Pancreas (tissue), 10 donors: ENCODE measurements at regions of chr10 and their contacts with region 1.

Region 1: DNA sequence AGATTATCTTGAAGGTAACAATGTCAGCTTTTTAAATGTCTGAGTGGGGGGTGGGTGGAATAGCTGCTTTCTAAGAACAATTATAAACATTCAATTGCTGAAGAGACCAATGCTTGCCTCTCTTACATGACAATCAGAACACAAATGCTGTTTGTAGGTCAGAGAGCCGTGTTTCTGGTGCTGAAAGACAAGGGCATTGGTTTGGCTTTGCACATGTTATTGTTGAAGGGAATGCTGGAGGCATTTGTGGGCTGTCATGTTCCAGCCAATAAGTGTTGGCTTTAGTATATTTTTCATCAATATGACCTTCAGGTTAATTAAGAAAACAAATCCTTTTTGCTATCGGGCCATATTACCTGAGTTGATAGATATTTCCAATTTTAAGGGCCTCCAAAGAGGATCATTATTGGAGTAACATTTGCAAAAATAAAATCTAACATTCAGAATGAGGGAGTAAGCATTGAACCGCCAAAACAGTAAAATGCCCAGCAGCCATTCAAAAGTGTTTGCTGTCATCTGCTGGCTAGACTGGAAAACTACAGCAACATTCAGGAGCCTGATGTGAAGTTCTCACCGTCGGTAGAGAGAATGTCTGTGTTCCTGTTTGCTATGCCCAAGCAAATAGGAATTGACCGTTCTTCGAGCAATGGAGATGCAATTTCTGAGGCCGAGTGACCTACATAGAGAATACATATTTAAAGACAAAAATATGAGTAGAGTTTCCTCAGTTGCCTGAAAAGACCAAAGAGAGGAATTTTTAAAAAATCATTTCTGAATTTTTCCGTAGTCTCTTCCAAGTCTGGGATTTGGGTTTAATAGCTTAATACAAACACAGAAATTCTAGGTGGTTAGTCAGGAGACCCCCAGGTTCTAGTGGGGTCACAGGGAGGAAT is 118.9 kb downstream of the APBB1IP start:
- DNase-seq: peak in 2 of 6 donors; percentile 7 to 41
- ATAC-seq: peak; percentile 73 to 89 (median 86)
- H3K4me3 ChIP-seq: no peak overlapping the region
- H3K27ac ChIP-seq: peak overlapping the region in 1 of 4 donors; percentile 17
- H3K4me1 ChIP-seq: peaks cover 0 to 7% (median 0%) of the 10 kb centered on the region in 3 donors
- H3K27me3 ChIP-seq: no peaks in the 10 kb centered on the region
- CTCF ChIP-seq: peak; percentile 33 to 74 (median 58)

Region 2: GRCh38 chr10:25875556-25876165 is 681.3 kb before region 1 on chr10:
- intact Hi-C with region 1: loop called in 1 of 3 experiments (anchors 10 kb)
- DNase-seq: peak; percentile 55 to 86 (median 70)
- ATAC-seq: peak; percentile 53 to 96 (median 94)
- H3K4me3 ChIP-seq: no peak overlapping the region
- H3K27ac ChIP-seq: no peak overlapping the region
- H3K4me1 ChIP-seq: no peaks in the 10 kb centered on the region
- H3K27me3 ChIP-seq: no peaks in the 10 kb centered on the region
- CTCF ChIP-seq: peak; percentile 60 to 80 (median 73)

Region 3: GRCh38 chr10:26334932-26335573 is 221.9 kb before region 1 on chr10:
- intact Hi-C with region 1: loop called in 2 of 3 experiments (anchors 10 kb)
- DNase-seq: peak in 3 of 6 donors; percentile 7 to 44 (median 28)
- ATAC-seq: peak; percentile 58 to 93 (median 91)
- H3K4me3 ChIP-seq: peak overlapping the region in 1 of 4 donors; percentile 5
- H3K27ac ChIP-seq: no peak overlapping the region
- H3K4me1 ChIP-seq: no peaks in the 10 kb centered on the region
- H3K27me3 ChIP-seq: no peaks in the 10 kb centered on the region
- CTCF ChIP-seq: peak in 3 of 4 donors; percentile 25 to 57 (median 33)